WTC11 (cell line): ENCODE measurements at regions of chr15 and their contacts with region 1.

Region 1: GRCh38 chr15:68348064-68348463 is 70.5 kb downstream of the FEM1B start:
- DNase-seq: no peak
- ATAC-seq: no peak
- H3K4me3 Mint-ChIP-seq: no peak overlapping the region
- H3K27ac Mint-ChIP-seq: no peak overlapping the region
- H3K4me1 Mint-ChIP-seq: peaks cover 16% of the 10 kb centered on the region
- H3K27me3 Mint-ChIP-seq: no peaks in the 10 kb centered on the region
- CTCF ChIP-seq: no peak

Region 2: DNA sequence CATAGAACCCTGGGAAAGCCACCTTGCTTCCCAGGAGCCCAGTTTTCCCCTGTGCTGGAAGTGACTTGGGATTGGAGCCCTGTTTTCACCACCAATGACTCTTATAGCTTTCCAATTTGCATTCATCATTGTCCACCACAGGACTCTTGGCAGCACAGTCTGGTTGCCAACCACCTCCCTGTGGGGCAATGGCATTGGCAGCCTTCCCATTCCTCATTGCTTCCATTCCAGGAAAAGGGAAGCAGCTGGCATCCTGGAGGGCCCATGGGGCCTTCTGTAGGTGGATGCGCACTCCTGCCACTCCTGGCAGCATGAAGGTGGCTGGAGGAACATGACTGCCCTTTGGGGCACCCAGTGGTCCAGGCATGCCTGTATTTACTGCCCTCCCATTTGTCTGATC is 12.8 kb before region 1 on chr15:
- CTCF ChIA-PET with region 1: interaction called, 6 read pairs
- POLR2A ChIA-PET with region 1: interaction called, 11 read pairs
- DNase-seq: no peak
- ATAC-seq: no peak
- H3K4me3 Mint-ChIP-seq: no peak overlapping the region
- H3K27ac Mint-ChIP-seq: no peak overlapping the region
- H3K4me1 Mint-ChIP-seq: peaks cover 13% of the 10 kb centered on the region
- H3K27me3 Mint-ChIP-seq: no peaks in the 10 kb centered on the region
- CTCF ChIP-seq: no peak